ENCODE measurements at regions of chr3 and their contacts with region 1.

Region 1: GRCh38 chr3:33131331-33132018 is 17.7 kb downstream of the CRTAP start:
- DNase-seq: no peak
- H3K4me3 ChIP-seq: no peak overlapping the region
- H3K27ac ChIP-seq: peak overlapping the region; percentile 39 to 40
- H3K4me1 ChIP-seq: peaks cover 0 to 11% (median 0%) of the 10 kb centered on the region in 4 donors
- H3K27me3 ChIP-seq: no peaks in the 10 kb centered on the region
- CTCF ChIP-seq: peak; percentile 73 to 79

Region 2: GRCh38 chr3:33229066-33229465 is 97.6 kb after region 1 on chr3:
- intact Hi-C with region 1: loop called (anchors 2 kb)
- DNase-seq: no peak
- H3K4me3 ChIP-seq: no peak overlapping the region
- H3K27ac ChIP-seq: no peak overlapping the region
- H3K4me1 ChIP-seq: no peaks in the 10 kb centered on the region
- H3K27me3 ChIP-seq: no peaks in the 10 kb centered on the region
- CTCF ChIP-seq: no peak

Region 3: DNA sequence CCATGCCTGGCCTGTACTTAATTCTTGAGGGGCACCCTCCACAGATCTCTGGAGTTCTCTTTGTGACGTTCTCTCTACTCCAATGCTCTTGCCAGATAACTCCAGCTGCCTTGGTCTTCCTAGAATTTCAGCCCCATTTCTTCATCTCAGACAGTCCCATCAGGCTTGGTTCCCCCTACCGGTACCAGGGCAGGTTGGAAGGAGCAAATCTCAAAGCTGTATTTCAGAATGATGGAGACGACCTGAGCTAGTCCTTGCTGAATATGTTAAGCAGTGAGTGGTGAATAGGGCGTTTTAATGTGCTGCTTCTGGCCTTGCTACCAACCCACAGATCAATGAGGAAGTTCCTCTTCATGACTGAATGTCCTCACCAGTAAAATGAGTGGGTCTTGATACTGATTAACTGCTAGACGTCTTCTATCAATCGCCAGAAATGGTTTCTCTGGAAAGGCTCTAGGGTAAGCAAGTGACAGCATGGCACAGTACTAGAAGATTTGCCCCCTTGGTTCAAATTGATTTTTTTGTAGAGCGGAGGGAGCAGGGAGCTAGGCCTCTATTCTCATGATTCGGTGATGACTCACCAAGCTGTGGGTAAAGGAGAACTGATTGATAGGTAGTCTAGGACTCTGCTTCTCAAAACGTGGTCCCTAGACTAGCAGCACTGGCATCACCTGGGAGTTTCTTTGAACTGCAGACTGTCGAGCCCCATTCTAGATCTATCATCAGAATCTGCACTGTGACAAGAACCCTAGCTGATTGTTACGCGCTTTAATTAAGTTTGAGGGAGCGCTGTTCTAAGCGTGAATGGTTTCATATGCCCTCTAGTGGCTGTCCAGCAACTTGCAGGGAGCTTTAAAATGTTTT is 241.0 kb after region 1 on chr3:
- intact Hi-C with region 1: loop called (anchors 1 kb)
- DNase-seq: peak in 1 of 2 donors; percentile 41
- H3K4me3 ChIP-seq: no peak overlapping the region
- H3K27ac ChIP-seq: peak overlapping the region; percentile 30 to 56
- H3K4me1 ChIP-seq: peaks cover 0 to 11% (median 0%) of the 10 kb centered on the region in 4 donors
- H3K27me3 ChIP-seq: no peaks in the 10 kb centered on the region
- CTCF ChIP-seq: peak; percentile 90 to 94

Region 4: DNA sequence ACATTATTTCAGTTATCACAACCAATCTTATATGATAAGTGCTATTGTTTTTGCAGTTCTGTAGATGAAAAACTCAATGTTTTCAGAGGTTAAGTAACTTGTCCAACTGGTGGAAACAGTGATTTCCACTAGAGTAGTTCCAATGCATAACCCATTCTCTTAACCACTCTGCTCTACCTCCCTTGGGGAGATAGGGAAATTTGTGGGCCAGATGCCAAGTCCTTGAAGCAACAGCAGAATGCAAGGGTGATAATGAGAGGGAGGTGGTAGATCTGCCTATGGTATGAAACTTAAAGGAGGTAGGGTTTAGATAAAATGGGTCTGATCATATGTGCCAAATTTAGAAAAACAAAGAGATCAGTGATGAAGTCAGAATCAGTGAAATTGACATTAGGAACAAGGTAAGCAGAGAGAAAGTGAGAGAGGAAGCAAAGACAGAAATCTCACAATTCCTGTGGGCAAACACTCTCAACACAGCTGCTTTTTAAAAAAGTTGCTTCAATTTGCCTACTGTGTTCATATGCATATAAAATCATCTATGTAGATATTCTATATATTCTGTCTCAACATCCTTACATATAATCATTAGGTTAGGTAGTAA is 359.3 kb after region 1 on chr3:
- intact Hi-C with region 1: no loop called
- DNase-seq: no peak
- H3K4me3 ChIP-seq: no peak overlapping the region
- H3K27ac ChIP-seq: no peak overlapping the region
- H3K4me1 ChIP-seq: no peaks in the 10 kb centered on the region
- H3K27me3 ChIP-seq: no peaks in the 10 kb centered on the region
- CTCF ChIP-seq: no peak